Activated CD4-positive, alpha-beta memory T cell treated with anti-CD3 and anti-CD28 coated beads for 36 hours (primary cell): ENCODE measurements at regions of chr7 and their contacts with region 1.

Region 1: GRCh38 chr7:149624419-149625339 is 127.1 kb upstream of the ZNF746 start:
- DNase-seq: peak; percentile 94
- H3K4me3 Mint-ChIP-seq: peak overlapping the region; percentile 83
- H3K27ac Mint-ChIP-seq: peak overlapping the region; percentile 79
- H3K4me1 Mint-ChIP-seq: peaks cover 46% of the 10 kb centered on the region
- H3K27me3 Mint-ChIP-seq: peaks cover 5% of the 10 kb centered on the region

Region 2: DNA sequence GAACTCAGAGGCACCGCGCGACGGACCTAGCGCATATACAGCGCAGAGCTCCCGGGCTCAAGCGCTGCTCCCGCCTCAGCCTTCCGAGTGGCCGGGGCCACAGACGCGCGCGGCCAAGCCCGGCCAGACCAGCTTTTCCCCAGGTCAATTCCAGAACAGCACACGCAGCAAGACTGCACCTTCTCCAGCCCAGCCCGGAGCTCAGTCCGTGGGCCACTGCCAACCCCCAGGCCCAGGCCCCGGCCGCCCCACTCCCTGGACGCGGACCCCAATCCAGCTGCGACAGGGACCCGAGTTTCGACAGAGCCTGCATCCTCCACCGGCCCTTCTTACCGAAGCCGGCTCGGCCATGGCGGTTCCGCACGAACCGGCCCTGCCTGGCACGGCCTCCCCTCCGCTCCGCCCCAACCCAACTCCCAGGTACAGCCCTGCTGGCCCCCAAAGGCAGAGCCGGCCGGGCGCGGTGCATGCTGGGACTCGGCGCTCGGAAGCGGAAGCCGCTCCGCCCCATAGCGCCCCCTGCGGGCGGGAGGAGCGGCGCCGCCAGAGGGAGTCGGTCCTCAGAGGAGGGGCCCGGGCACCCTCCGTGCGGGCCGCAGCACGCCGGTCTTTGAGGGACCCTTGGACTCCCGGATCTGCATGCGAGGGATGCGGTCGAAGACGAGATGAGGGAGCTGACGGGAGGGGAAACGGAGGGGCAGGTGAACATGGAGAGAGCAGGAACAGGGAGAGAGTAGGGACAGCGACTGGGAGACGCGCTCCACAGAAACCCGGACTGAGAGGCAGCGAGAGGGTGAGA is 498.6 kb before region 1 on chr7 and contains the start of gene ZNF425:
- CTCF ChIA-PET with region 1: no interaction called
- POLR2A ChIA-PET with region 1: no interaction called
- intact Hi-C with region 1: loop called (anchors 10 kb)
- DNase-seq: peak; percentile 95
- H3K4me3 Mint-ChIP-seq: peak within 1 kb of the TSS; percentile 98
- H3K27ac Mint-ChIP-seq: peak within 1 kb of the TSS; percentile 98
- H3K4me1 Mint-ChIP-seq: peaks cover 18% of the 10 kb centered on the region
- H3K27me3 Mint-ChIP-seq: no peaks in the 10 kb centered on the region
- total RNA-seq, gene ZNF425: 0.74 to 0.75 TPM

Region 3: DNA sequence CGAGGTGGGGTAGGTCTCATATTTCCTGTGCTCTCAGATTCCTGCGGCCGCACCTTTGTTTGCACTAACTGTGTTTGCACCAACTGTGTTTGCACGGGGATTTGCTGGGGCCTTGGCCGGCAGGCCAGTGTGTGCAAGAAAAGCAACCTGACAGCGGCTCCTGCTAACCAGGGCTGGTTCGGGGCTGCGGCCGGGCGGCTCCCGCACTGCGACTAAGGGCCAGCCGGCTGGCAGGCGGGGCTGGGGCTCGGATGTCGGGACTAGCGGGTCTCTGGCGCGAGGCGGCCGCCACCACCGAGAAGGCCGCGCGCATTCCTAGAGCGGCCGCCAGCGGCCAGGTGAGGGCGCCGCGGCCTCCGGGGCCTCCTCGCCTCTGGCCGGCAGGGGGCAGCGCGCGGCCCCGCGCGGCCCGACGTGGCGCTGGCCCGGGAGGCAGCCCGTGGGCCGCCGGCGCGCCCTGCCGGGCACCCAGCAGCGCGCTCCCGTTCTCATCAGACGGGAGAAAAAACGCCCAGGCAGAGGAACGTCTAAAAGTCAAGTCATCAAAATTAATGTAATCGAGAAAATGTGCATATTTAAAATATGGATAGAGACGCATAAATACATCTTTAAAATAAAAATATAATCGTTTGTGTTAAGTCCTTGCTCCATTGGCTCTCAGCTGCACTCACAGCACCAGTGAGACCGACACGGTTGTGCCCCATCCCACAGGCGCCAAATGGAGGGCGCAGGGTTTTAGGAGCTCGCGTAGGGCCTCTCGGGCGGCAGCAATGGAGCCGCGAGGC is 202.4 kb before region 1 on chr7:
- CTCF ChIA-PET with region 1: interaction called, 9 read pairs
- POLR2A ChIA-PET with region 1: interaction called, 4 read pairs
- intact Hi-C with region 1: loop called (anchors 1 kb)
- DNase-seq: peak; percentile 80
- H3K4me3 Mint-ChIP-seq: peak overlapping the region; percentile 72
- H3K27ac Mint-ChIP-seq: peak overlapping the region; percentile 51
- H3K4me1 Mint-ChIP-seq: peaks cover 9% of the 10 kb centered on the region
- H3K27me3 Mint-ChIP-seq: no peaks in the 10 kb centered on the region

Region 4: DNA sequence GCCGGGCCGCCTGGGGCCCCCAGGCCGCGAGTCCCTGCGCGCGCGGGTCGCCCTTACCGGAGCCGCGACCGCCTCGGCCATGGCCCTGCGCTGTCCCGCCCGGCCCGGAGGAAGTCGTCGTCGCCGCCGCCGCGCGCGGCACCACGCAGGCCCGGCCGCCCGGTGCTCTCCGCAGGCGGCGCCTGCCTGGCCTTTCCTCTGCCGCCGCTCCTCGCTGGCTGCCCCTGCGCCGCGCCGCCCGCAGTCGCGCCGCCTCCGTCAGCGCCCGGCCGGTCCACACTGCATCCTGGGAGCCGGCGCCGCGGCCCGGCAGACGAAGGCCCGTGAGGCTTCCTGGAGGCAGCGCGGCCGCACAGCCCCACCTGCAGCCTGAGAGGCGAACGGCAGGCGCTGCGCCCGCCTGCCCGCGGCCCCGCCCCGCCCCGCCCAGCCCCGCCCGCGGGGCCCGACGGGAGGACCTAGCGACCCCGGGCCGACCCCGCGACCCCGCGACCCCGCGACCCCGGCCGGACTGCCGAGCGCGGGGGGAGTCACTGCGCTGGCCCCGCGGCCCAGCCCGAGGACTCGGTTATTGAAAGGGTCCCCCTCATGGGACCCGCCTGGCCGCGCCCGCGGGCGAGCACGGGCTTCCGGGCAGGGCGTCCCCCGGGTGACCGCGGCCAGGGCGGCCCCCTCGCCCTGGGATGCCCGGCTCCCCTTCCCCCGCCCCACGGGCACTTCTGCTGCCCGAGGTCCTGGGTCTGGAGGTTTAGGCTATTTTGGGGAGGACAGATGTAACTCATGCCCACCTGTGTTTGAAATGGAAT is 127.0 kb before region 1 on chr7 and contains the start of gene ZNF746:
- CTCF ChIA-PET with region 1: interaction called, 16 read pairs
- POLR2A ChIA-PET with region 1: interaction called, 3 read pairs
- intact Hi-C with region 1: loop called (anchors 1 kb)
- DNase-seq: peak; percentile 89
- H3K4me3 Mint-ChIP-seq: peak within 1 kb of the TSS; percentile 98
- H3K27ac Mint-ChIP-seq: peak within 1 kb of the TSS; percentile 94
- H3K4me1 Mint-ChIP-seq: peaks cover 30% of the 10 kb centered on the region
- H3K27me3 Mint-ChIP-seq: peaks cover 2% of the 10 kb centered on the region
- total RNA-seq, gene ZNF746: 13.5 to 14.9 TPM

Region 5: GRCh38 chr7:149598721-149599306 is 25.9 kb before region 1 on chr7:
- CTCF ChIA-PET with region 1: interaction called, 29 read pairs
- POLR2A ChIA-PET with region 1: interaction called, 3 read pairs
- intact Hi-C with region 1: loop called (anchors 1 kb)
- DNase-seq: peak; percentile 66
- H3K4me3 Mint-ChIP-seq: no peak overlapping the region
- H3K27ac Mint-ChIP-seq: peak overlapping the region; percentile 72
- H3K4me1 Mint-ChIP-seq: peaks cover 35% of the 10 kb centered on the region
- H3K27me3 Mint-ChIP-seq: no peaks in the 10 kb centered on the region

Region 6: DNA sequence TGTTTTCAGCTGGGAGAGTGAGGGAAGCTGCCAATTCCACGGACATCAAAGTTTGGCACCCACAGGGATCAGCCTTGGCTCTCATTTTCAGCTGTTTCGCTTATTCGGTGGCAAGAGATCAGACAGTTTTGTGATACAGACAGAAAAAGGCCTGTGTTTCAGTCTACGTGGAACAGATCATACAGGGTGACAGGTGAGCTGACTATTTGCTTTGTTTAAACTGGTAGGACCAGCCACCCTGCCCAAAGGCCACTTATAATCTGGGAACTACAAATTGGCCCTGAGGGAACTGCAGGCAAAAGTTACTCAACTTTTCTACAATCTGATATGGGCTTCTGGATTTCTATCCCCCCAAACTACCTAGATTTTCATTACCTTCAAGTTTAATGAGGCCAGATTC is 20.1 kb after region 1 on chr7:
- CTCF ChIA-PET with region 1: no interaction called
- POLR2A ChIA-PET with region 1: no interaction called
- intact Hi-C with region 1: no loop called
- DNase-seq: no peak
- H3K4me3 Mint-ChIP-seq: no peak overlapping the region
- H3K27ac Mint-ChIP-seq: no peak overlapping the region
- H3K4me1 Mint-ChIP-seq: no peaks in the 10 kb centered on the region
- H3K27me3 Mint-ChIP-seq: peaks cover 15% of the 10 kb centered on the region

Region 7: GRCh38 chr7:149690688-149691446 is 66.2 kb after region 1 on chr7:
- CTCF ChIA-PET with region 1: no interaction called
- POLR2A ChIA-PET with region 1: no interaction called
- intact Hi-C with region 1: no loop called
- DNase-seq: peak; percentile 27
- H3K4me3 Mint-ChIP-seq: no peak overlapping the region
- H3K27ac Mint-ChIP-seq: no peak overlapping the region
- H3K4me1 Mint-ChIP-seq: no peaks in the 10 kb centered on the region
- H3K27me3 Mint-ChIP-seq: peaks cover 41% of the 10 kb centered on the region

Region 8: GRCh38 chr7:149873074-149873969 is 248.6 kb after region 1 on chr7 and contains the start of gene ATP6V0E2:
- CTCF ChIA-PET with region 1: no interaction called
- POLR2A ChIA-PET with region 1: no interaction called
- intact Hi-C with region 1: loop called (anchors 5 kb)
- DNase-seq: peak; percentile 96
- H3K4me3 Mint-ChIP-seq: peak within 1 kb of the TSS; percentile 86
- H3K27ac Mint-ChIP-seq: peak within 1 kb of the TSS; percentile 86
- H3K4me1 Mint-ChIP-seq: peaks cover 69% of the 10 kb centered on the region
- H3K27me3 Mint-ChIP-seq: no peaks in the 10 kb centered on the region
- total RNA-seq, gene ATP6V0E2: 33.5 to 34.1 TPM